B cell (primary cell): ENCODE measurements at regions of chr16 and their contacts with region 1.

Region 1: DNA sequence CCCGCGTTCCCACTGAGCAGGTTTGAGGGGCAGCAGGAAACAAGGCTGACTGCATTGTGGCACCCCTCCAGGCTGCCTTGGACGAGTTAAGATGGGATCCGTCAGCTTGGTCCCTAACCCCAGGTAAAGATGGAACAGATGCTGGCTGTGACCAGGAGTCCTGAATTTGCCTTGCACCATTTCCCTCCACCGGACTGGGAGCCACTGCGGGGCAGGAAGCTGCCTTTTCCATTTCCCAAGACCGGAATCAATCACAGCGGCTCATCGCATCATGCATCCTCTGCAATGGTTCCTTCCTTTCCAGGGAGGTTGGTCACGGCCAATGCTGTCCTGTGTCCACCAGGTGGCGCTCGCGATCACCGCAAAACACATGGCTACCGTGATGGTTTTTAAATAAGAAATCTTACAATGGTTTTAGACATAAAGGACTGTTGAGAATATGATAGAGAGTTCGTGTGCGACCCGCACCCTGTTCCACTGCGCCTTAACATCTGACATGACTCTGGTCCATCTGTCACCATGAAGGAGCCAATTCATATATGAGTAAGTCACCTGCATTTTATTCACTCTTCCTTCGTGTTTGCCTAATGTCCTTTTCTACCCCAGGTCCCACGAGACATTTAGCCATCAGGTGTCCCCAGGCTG is 6.8 kb upstream of the MEAK7 start:
- DNase-seq: peak; percentile 87
- ATAC-seq: peak; percentile 40
- H3K4me3 ChIP-seq: no peak overlapping the region
- H3K4me3 Mint-ChIP-seq: peak overlapping the region; percentile 44
- H3K27ac ChIP-seq: no peak overlapping the region
- H3K27ac Mint-ChIP-seq: peak overlapping the region; percentile 77
- H3K4me1 ChIP-seq: peaks cover 41 to 57% of the 10 kb centered on the region in 2 donors
- H3K4me1 Mint-ChIP-seq: peaks cover 49% of the 10 kb centered on the region
- H3K27me3 ChIP-seq: peaks cover 0 to 3% (median 0%) of the 10 kb centered on the region in 4 experiments
- H3K27me3 Mint-ChIP-seq: no peaks in the 10 kb centered on the region
- CTCF ChIP-seq: peak; percentile 98

Region 2: GRCh38 chr16:84553873-84554399 is 42.6 kb after region 1 on chr16:
- CTCF ChIA-PET with region 1: interaction called, 4 read pairs
- POLR2A ChIA-PET with region 1: interaction called, 3 read pairs
- intact Hi-C with region 1: loop called (anchors 2 kb)
- DNase-seq: no peak
- ATAC-seq: no peak
- H3K4me3 ChIP-seq: no peak overlapping the region
- H3K4me3 Mint-ChIP-seq: no peak overlapping the region
- H3K27ac ChIP-seq: no peak overlapping the region
- H3K27ac Mint-ChIP-seq: no peak overlapping the region
- H3K4me1 ChIP-seq: peaks cover 4 to 10% of the 10 kb centered on the region in 2 donors
- H3K4me1 Mint-ChIP-seq: peaks cover 17% of the 10 kb centered on the region
- H3K27me3 ChIP-seq: peaks cover 0 to 4% (median 0%) of the 10 kb centered on the region in 4 experiments
- H3K27me3 Mint-ChIP-seq: no peaks in the 10 kb centered on the region
- CTCF ChIP-seq: no peak

Region 3: DNA sequence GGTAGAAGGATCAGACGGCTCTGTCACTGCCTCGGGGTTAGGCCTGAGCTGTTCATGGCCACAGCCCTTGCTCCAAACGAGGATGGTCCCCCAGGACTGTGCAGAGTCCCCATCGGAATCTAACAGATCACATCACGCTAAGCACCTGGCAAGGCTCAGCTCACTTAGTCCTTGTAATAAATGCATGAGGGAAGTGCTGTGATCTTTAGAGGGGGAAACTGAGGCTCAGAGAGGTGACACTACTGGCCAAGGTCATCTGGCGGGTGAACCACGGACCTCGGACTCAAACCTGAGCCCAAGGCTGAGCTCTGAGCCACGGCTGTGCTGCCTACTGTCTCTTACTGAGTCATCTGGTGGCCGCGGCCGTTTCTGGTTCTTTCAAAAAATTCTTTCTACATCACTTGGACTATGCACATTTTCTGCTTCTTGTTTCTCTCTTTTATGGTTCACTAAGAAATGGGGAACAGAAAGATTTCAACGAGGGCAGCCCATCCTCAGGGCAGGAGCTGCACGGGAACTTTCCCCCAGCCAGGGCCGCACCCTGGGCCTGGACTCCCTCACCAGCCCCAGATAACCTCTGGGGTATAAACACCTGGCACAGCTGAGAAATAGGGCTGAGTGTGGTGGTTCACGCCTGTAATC is 51.0 kb after region 1 on chr16:
- CTCF ChIA-PET with region 1: interaction called, 8 read pairs
- POLR2A ChIA-PET with region 1: interaction called, 3 read pairs
- intact Hi-C with region 1: loop called (anchors 2 kb)
- DNase-seq: peak; percentile 80
- ATAC-seq: peak; percentile 89
- H3K4me3 ChIP-seq: no peak overlapping the region
- H3K4me3 Mint-ChIP-seq: peak overlapping the region; percentile 58
- H3K27ac ChIP-seq: peak overlapping the region; percentile 61 to 69
- H3K27ac Mint-ChIP-seq: peak overlapping the region; percentile 90
- H3K4me1 ChIP-seq: peaks cover 23 to 32% of the 10 kb centered on the region in 2 donors
- H3K4me1 Mint-ChIP-seq: peaks cover 27% of the 10 kb centered on the region
- H3K27me3 ChIP-seq: peaks cover 0 to under 1% (median 0%) of the 10 kb centered on the region in 4 experiments
- H3K27me3 Mint-ChIP-seq: no peaks in the 10 kb centered on the region
- CTCF ChIP-seq: no peak

Region 4: DNA sequence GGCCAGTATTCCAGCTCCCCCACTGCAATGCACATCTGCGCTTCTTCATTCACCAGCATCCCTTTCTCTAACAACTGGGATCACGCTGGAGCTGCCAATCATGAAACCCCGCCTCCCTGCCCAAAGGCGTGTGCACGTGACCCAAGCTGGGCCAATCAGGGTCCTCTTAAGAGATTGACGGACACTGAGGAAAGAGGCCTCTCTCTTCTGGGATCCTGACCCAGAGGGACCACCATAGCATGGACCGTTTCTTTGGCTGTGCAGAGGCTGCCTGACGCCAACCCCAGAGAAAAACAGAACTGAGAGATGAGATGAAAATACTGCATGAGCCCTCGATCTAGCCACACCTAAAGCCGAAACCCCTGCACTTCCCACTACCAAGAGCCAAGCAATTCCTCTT is 74.6 kb after region 1 on chr16:
- CTCF ChIA-PET with region 1: interaction called, 24 read pairs
- POLR2A ChIA-PET with region 1: interaction called, 6 read pairs
- intact Hi-C with region 1: no loop called
- DNase-seq: peak; percentile 73
- ATAC-seq: peak; percentile 84
- H3K4me3 ChIP-seq: peak overlapping the region in 3 of 5 experiments; percentile 20 to 43 (median 40)
- H3K4me3 Mint-ChIP-seq: peak overlapping the region; percentile 78
- H3K27ac ChIP-seq: peak overlapping the region; percentile 37 to 41
- H3K27ac Mint-ChIP-seq: peak overlapping the region; percentile 88
- H3K4me1 ChIP-seq: peaks cover 30 to 63% of the 10 kb centered on the region in 2 donors
- H3K4me1 Mint-ChIP-seq: peaks cover 56% of the 10 kb centered on the region
- H3K27me3 ChIP-seq: no peaks in the 10 kb centered on the region
- H3K27me3 Mint-ChIP-seq: no peaks in the 10 kb centered on the region
- CTCF ChIP-seq: no peak

Region 5: DNA sequence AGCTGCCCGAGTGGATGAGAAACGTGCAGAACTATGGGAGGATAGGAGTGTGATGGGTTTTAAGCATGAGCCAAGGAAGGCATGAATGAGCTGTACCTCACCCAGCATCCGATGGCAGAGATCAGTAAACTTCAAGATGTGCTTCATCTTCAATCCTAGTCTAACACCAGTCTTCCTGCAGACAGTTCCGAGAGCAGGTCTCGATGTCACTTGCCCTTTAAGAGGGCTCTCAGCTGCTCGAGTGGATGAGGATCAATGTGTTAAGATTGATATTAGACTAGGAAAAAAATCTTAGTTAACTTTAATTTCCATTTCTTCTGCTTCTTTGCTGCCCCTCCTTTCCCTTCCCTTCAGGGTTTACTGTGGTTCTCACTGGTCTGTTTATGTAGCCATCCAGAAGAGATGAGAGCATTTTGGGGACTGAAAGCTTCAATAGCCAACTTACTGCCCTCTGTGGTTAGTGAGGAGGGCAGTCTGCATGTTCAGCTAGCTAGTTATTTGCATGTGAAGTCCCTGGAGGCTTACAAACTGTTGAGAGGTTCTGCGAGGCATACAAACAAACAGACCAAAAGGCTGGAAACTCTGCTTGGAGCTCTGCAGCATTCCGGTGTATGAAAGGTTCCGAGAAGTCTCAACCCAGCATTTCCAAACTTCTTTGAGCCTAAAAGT is 152.3 kb after region 1 on chr16:
- CTCF ChIA-PET with region 1: interaction called, 10 read pairs
- POLR2A ChIA-PET with region 1: no interaction called
- intact Hi-C with region 1: no loop called
- DNase-seq: peak; percentile 61
- ATAC-seq: peak; percentile 93
- H3K4me3 ChIP-seq: peak overlapping the region in 1 of 5 experiments; percentile 20
- H3K4me3 Mint-ChIP-seq: peak overlapping the region; percentile 78
- H3K27ac ChIP-seq: peak overlapping the region in 1 of 2 donors; percentile 16
- H3K27ac Mint-ChIP-seq: peak overlapping the region; percentile 69
- H3K4me1 ChIP-seq: peaks cover 23 to 24% of the 10 kb centered on the region in 2 donors
- H3K4me1 Mint-ChIP-seq: peaks cover 29% of the 10 kb centered on the region
- H3K27me3 ChIP-seq: no peaks in the 10 kb centered on the region
- H3K27me3 Mint-ChIP-seq: no peaks in the 10 kb centered on the region
- CTCF ChIP-seq: no peak